ENCODE measurements at regions of chr15 and their contacts with region 1.

Region 1: GRCh38 chr15:82849556-82850512 is 40.4 kb downstream of the WHAMM start:
- DNase-seq: peak; percentile 66
- CTCF ChIP-seq: peak; percentile 70

Region 2: DNA sequence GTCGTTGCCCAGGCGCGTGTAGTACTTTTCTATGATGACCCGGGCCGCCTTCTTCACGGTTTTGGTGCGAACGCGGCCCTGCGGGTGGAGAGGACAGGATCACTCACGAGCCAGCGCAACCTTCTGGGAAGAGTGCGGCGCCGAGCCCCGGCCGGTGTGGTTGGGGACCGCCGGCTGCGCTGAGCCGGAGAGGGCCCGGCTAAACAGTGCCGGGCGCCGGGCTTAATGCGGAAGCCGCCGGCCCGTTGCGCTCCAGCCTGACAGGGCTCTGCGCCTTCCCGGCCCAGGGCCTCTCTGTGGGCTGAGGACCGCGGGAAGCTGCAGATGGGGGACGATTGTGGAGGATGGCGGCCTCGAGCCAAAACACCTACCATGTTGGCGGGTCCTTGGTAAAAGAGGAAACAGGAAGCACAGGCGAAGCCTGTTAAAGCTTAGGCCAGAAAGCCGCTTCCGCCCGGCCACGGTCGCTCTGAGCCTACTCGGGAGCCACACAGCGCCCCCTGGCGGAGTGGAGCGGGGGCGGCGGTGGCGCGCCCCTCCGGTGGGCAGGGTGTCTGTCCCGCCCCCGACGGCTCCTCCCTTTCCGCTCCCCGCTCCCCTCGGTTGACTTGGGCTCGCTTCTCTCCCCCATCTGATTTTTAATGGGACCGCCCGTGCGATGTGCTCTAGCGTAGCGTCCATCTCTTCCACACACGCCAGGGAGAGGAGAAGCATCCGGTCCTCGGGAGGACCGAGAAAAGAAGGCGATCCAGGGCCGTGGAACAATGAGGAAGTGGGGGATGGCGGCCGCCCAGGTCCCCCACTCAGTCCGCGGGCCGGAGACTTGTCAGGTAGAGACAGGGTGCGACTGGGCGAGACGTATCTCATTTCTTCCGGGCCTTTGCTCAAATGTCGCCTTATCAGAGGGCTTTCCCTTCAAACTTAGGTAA is 309.5 kb before region 1 on chr15 and contains the start of gene RPS17:
- in situ Hi-C with region 1: loop called (anchors 25 kb)
- DNase-seq: peak; percentile 99
- CTCF ChIP-seq: peak; percentile 94

Region 3: GRCh38 chr15:82714026-82714425 is 135.8 kb before region 1 on chr15:
- in situ Hi-C with region 1: no loop called
- DNase-seq: no peak
- CTCF ChIP-seq: no peak

Region 4: DNA sequence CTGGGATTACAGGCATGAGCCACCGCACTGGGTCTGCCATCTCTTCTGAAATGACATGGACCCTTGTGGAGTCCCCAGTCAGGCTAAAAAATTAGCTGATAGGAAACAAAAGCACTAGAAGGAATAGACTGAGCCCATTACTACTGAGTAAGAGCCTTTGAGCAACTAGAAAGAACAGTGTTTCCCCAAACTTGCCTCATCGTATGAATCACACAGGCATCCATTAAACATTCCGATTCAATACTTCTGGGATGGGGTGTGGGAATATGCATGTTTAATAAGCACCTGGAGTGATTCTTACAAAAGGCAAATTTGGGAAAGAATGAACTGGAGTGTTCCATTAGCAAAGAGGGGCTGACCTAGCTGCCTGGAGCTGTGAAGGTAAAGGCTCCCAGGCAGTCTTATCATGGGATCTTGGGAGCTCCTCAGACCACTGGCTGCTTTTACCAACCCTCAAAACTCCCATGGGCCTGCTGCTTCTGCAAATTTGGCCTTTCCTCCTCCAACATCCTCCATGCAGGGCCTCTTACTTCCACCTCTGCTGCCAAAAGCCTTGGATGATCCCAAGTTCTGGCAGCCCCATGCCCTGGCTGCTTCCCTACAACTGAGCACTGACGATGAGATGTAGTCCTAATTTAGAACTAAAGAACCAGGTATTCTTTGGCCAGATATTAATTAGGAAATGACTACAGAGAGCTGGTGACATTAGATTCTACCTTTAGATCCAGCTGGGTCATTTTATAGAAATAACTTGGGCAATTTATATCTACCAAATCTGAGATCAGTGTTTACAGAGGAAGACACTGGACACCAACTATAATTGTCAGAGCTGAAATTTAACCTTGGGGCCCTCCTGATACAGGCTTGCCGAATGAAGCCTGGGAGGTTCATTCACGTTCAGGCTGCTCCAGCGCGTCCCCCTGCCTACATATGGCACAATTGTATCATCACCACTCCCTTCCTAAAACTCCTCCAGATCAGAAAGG is 113.8 kb after region 1 on chr15:
- in situ Hi-C with region 1: no loop called
- DNase-seq: no peak
- CTCF ChIP-seq: no peak

Region 5: DNA sequence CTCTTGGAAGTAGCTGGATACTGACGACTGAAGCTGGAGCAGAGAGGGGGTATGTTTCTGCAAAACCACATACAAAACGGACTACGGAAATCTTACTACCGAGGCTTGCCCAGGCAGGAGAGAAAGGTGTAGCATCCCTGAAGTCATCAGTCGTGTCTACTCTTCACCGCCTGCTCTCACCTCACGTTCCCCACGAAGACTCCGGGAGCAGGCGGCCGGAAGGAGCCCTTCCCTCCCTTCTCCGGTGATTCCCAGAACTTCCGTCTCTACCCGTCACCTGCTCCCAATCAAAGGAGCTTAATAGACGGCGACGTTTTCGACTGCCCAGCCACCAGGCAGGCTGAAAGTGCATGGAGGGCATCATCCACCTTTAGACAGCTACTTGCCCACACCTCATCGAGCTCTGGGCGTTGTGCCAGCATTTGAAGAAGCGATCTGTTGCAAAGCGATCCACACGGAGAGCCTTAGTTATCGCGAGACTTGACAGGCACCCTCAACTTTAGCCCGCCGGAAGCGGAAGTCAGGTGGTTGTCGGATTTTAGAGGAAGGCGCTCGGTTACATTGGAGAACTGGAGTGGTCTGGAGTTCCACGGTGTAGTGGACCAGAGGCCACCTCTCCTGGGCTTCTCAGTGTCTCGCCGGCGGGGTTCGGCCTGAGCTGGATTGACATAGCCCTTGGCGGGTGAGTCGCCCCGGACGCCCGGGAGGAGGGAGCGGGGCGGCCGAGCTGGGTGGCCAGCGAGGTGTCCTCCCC is 136.0 kb after region 1 on chr15 and contains the start of gene RAMAC:
- in situ Hi-C with region 1: loop called (anchors 10 kb)
- DNase-seq: peak; percentile 89
- CTCF ChIP-seq: no peak

Measured in GM13977 (cell line).